AG04450 (cell line): ENCODE measurements at regions of chr17 and their contacts with region 1.

Region 1: GRCh38 chr17:55717898-55718735 is 4.5 kb downstream of the TMEM100 start:
- DNase-seq: peak; percentile 48
- H3K4me3 ChIP-seq: no peak overlapping the region
- H3K27ac ChIP-seq: no peak overlapping the region
- H3K27me3 ChIP-seq: no peaks in the 10 kb centered on the region
- CTCF ChIP-seq: peak; percentile 80

Region 2: GRCh38 chr17:55533608-55534007 is 184.5 kb before region 1 on chr17:
- CTCF ChIA-PET with region 1: interaction called, 165 read pairs
- POLR2A ChIA-PET with region 1: no interaction called
- DNase-seq: no peak
- H3K4me3 ChIP-seq: no peak overlapping the region
- H3K27ac ChIP-seq: no peak overlapping the region
- H3K27me3 ChIP-seq: no peaks in the 10 kb centered on the region
- CTCF ChIP-seq: no peak

Region 3: GRCh38 chr17:55549140-55549539 is 169.0 kb before region 1 on chr17:
- CTCF ChIA-PET with region 1: no interaction called
- POLR2A ChIA-PET with region 1: no interaction called
- DNase-seq: no peak
- H3K4me3 ChIP-seq: no peak overlapping the region
- H3K27ac ChIP-seq: no peak overlapping the region
- H3K27me3 ChIP-seq: no peaks in the 10 kb centered on the region
- CTCF ChIP-seq: peak; percentile 40

Region 4: DNA sequence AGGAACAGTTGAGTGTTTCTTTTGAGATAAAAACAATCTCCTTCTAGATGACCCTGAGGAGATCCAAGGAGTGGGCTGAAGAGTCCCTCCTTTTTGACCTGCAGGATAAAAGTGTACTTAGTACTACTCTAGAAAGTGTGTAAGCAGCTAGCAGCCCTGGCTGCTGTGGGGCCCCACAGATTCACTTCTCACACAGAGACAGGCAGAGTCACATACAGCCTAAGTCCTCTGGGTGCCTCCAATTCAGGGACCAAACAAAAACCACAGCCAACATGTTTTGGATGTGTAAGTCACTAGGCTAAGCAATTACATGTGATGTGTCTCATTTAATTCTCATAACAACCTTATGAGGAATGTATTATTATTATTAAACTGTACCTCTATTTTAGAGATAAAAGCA is 92.6 kb before region 1 on chr17:
- CTCF ChIA-PET with region 1: no interaction called
- POLR2A ChIA-PET with region 1: no interaction called
- DNase-seq: no peak
- H3K4me3 ChIP-seq: no peak overlapping the region
- H3K27ac ChIP-seq: no peak overlapping the region
- H3K27me3 ChIP-seq: peaks cover 3% of the 10 kb centered on the region
- CTCF ChIP-seq: no peak

Region 5: GRCh38 chr17:55641676-55642081 is 76.4 kb before region 1 on chr17:
- CTCF ChIA-PET with region 1: interaction called, 20 read pairs
- POLR2A ChIA-PET with region 1: no interaction called
- DNase-seq: peak; percentile 48
- H3K4me3 ChIP-seq: no peak overlapping the region
- H3K27ac ChIP-seq: no peak overlapping the region
- H3K27me3 ChIP-seq: peaks cover 5% of the 10 kb centered on the region
- CTCF ChIP-seq: peak; percentile 80

Region 6: GRCh38 chr17:55705849-55706248 is 12.3 kb before region 1 on chr17:
- CTCF ChIA-PET with region 1: interaction called, 55 read pairs
- POLR2A ChIA-PET with region 1: no interaction called
- DNase-seq: no peak
- H3K4me3 ChIP-seq: no peak overlapping the region
- H3K27ac ChIP-seq: no peak overlapping the region
- H3K27me3 ChIP-seq: no peaks in the 10 kb centered on the region
- CTCF ChIP-seq: no peak

Region 7: GRCh38 chr17:55735731-55736405 is 17.8 kb after region 1 on chr17:
- CTCF ChIA-PET with region 1: interaction called, 146 read pairs
- POLR2A ChIA-PET with region 1: no interaction called
- DNase-seq: no peak
- H3K4me3 ChIP-seq: no peak overlapping the region
- H3K27ac ChIP-seq: no peak overlapping the region
- H3K27me3 ChIP-seq: no peaks in the 10 kb centered on the region
- CTCF ChIP-seq: peak; percentile 79

Region 8: GRCh38 chr17:55750750-55751657 is 32.9 kb after region 1 on chr17 and contains the start of gene PCTP:
- CTCF ChIA-PET with region 1: interaction called, 10 read pairs
- POLR2A ChIA-PET with region 1: no interaction called
- DNase-seq: peak; percentile 68
- H3K4me3 ChIP-seq: peak within 1 kb of the TSS; percentile 89
- H3K27ac ChIP-seq: peak within 1 kb of the TSS; percentile 59
- H3K27me3 ChIP-seq: peaks cover 6% of the 10 kb centered on the region
- CTCF ChIP-seq: peak; percentile 57
- polyA plus RNA-seq, gene PCTP: 17.3 and 20.5 TPM in 2 replicates